Activated CD4-positive, alpha-beta memory T cell treated with anti-CD3 and anti-CD28 coated beads for 36 hours (primary cell): ENCODE measurements at regions of chr2 and their contacts with region 1.

Region 1: DNA sequence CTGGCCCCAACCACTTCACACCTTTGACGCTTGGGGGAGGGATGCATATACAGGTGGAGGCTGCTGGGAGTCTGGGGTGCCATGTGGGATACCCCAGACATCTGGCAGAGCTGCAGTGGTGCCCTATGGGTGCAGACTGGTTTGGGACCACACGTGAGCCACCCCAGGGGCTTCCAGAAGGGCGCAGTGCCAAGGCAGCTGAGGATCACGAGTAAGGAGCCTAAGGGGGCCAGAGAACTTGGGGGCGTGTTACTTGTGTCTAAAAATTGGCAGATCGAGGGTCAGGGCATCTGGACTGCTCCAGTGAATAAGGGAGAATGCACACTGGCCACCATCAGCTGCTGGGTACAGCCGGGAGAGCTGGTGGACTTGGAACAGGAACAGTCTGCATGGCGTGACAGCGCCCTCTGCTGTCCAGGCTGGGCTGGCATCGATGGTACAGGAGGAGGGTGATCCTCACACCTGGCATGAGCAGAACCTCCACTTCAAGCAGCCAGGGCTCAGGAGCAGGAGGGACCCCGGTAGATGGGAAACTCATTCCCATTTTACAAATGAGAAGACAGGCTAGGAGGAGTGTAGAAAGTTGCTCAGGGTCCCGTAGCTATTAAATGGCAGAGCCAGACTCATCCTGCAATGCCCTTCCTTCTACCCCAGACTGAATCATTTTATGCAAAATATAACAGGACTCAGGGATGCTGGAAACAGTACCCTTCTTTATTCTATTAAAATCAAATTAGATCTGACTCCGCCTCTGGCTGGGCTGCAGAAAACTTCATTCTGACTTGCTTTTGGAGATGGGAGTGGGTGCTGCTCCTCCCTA is 60.4 kb downstream of the ATOH8 start:
- DNase-seq: peak; percentile 88
- H3K4me3 Mint-ChIP-seq: no peak overlapping the region
- H3K27ac Mint-ChIP-seq: no peak overlapping the region
- H3K4me1 Mint-ChIP-seq: no peaks in the 10 kb centered on the region
- H3K27me3 Mint-ChIP-seq: peaks cover 12% of the 10 kb centered on the region

Region 2: DNA sequence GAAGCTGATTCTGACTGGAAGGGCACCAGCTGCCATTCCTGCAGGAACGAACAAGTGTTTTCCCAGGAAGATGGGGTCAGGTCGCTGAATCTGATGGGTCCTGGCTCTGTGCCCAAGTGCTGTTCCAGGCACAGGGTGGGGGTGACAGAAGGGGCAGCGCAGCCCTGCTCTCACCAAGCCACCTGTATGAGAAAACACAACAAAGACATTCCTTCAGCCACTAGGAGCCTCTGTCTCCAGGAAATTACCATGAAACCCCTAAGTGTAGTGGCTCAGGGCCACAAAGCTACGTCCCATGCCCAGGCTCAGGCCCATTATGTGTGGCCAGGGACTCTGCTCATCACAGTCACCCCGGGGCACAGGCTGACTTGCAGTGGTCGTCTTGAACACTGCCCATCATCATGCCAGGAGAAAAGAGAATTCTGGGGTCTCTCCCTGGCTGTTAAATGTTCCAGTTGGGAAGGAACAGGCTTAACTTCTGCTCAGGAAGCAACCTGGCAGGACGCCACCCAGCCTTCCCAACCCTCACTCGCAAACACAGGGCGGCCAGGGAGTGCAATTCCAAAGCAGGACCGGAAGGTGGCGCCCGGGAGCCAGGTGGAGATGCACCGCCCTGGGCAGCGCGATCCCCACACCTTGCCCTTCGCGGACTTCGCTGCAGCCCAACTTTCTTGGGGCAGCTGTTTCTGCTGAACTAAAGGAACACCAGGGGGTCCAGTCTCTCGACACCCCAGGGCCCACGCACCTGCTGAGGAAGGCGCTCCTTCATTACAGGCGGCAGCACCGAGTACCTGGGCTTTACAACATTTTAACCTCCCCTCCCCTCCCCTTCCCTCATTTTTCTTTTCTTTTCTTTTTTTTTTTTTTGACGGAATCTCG is 135.2 kb before region 1 on chr2:
- CTCF ChIA-PET with region 1: interaction called, 26 read pairs
- POLR2A ChIA-PET with region 1: no interaction called
- intact Hi-C with region 1: no loop called
- DNase-seq: peak; percentile 83
- H3K4me3 Mint-ChIP-seq: no peak overlapping the region
- H3K27ac Mint-ChIP-seq: no peak overlapping the region
- H3K4me1 Mint-ChIP-seq: peaks cover 3% of the 10 kb centered on the region
- H3K27me3 Mint-ChIP-seq: peaks cover 2% of the 10 kb centered on the region

Region 3: GRCh38 chr2:85728883-85729824 is 85.0 kb before region 1 on chr2:
- CTCF ChIA-PET with region 1: interaction called, 107 read pairs
- POLR2A ChIA-PET with region 1: no interaction called
- intact Hi-C with region 1: loop called (anchors 1 kb)
- DNase-seq: peak; percentile 80
- H3K4me3 Mint-ChIP-seq: no peak overlapping the region
- H3K27ac Mint-ChIP-seq: no peak overlapping the region
- H3K4me1 Mint-ChIP-seq: no peaks in the 10 kb centered on the region
- H3K27me3 Mint-ChIP-seq: peaks cover 3% of the 10 kb centered on the region

Region 4: DNA sequence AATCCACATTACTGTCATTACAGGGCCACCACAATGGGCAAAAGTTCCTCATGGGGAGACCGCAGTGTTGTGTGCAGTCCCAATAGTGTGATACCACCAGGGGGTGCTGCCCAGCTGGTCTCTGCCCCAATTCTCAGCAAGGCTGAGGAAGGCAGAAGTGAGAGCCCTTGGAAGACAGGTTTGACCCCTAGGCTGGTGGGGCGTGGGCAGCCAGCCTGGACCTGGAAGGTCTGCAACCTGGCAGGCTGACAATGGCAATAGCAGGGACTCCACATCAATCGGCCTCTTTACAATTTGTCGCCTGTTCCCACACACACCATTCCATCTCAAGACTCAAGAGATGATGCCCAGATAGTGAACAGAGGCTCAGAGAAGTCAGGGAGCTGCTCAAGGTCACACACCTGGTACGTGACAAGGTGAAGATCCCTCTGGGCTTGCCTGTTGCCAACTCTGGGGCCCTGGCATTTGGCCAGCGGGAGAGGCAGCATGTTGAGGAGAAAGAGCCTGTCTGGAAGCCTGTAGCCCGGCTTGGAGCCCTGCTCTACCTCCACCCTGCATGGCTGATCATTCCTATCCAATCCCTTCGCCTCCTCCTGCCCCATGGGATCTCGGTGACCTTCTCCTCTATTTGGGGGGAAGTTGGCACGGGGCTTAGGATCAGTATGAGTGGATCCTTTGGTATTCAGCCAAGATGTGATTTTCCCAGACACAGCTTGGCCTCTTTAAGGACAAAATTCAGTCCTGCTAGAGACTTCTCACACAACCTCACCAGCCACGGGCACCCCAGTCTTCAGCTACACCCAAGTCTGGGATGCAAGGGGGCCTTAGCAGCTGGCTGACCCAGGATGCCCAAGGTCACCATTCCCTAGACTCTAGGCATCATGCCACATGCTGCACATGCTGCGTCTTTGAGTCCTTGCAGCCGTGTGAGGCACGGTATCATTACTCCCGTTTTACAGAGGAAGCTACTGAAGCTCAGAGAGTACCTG is 63.3 kb before region 1 on chr2:
- CTCF ChIA-PET with region 1: interaction called, 93 read pairs
- POLR2A ChIA-PET with region 1: no interaction called
- intact Hi-C with region 1: loop called (anchors 1 kb)
- DNase-seq: peak; percentile 68
- H3K4me3 Mint-ChIP-seq: no peak overlapping the region
- H3K27ac Mint-ChIP-seq: no peak overlapping the region
- H3K4me1 Mint-ChIP-seq: peaks cover 13% of the 10 kb centered on the region
- H3K27me3 Mint-ChIP-seq: peaks cover 41% of the 10 kb centered on the region

Region 5: DNA sequence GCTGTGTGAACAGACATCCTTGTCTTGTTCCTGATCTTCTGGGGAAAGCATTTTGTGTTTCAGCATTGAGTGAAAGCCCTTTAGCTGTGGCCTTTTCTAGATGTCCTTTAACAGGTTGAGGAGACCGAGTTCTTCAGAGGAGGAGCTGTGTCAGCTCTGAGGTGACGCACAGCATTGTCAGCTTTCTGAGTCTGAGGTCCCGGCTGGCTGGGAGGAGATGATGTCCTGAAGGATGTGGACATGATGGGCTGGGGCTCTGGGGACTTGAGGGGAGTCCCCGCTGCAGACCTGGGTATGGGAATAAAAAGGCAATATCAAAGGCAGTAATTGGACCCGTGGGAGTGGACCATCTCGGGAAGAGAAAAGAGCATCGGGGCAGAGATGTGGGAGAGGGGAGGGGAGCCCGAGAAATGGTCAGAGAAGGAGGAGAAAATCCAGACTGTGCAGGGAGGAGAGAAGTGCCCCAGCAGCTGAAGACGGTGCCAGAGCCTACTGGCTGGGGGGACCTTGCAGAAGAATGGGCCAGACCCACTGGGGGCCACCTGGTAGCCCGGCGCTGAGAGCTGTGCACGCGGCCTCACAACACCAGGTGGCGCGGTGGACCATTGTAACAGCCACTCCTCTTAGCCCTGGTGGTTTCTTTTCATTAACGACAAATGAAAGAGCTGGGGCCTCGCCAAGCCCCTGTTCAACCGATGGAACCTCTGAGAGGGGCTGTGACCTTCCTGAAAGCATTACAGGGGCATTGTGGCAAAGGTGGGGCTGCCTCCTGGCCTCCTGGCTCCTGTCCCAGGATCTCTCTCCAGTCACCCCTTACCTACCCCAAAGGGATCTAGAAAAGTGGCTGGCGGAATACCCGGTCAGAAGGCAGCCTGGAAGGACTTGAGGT is 13.0 kb after region 1 on chr2:
- CTCF ChIA-PET with region 1: interaction called, 47 read pairs
- POLR2A ChIA-PET with region 1: no interaction called
- intact Hi-C with region 1: no loop called
- DNase-seq: peak; percentile 86
- H3K4me3 Mint-ChIP-seq: no peak overlapping the region
- H3K27ac Mint-ChIP-seq: no peak overlapping the region
- H3K4me1 Mint-ChIP-seq: peaks cover 15% of the 10 kb centered on the region
- H3K27me3 Mint-ChIP-seq: peaks cover 3% of the 10 kb centered on the region